GM13977 (cell line): ENCODE measurements at regions of chr1 and their contacts with region 1.

Region 1: GRCh38 chr1:160193091-160193819 is 2.9 kb downstream of the CASQ1 start:
- DNase-seq: peak; percentile 74
- CTCF ChIP-seq: peak; percentile 94

Region 2: DNA sequence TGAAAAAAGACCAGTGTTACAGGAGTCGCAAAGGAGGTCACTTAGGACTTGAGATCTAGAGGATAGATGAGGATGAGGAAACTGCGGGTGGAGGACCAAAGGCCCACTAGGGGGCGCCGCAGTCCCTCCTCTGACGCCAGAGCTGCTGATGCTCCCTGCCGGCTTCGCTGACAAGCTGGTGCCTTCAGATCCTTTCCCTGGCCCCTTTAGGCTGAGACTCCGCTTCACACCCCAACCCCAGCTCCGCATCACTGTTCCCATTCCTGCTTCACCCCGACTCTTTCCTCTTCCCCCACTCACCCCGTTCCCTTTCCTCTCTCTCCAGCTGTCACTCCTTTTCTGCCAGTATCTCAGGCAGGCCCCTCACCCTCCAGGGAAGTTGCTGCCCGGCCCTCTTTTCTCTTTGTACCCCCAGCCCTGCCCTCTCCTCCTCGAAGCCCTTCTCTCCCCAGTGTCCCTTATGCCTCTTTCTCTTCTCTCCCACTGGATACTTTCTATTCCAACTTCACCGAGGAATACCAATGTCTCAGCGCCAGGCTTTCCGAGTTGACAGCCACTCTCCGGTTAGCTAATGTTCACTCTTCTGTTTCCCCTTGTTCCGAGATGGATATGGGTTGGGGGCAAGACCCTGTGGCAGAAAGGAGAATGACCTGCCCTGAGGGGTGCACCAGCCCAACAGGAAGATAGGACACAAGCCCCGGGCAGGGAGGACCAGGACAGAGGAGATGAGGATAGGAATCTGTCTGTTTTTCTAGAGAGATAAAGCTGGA is 107.4 kb before region 1 on chr1:
- in situ Hi-C with region 1: no loop called
- DNase-seq: peak; percentile 93
- CTCF ChIP-seq: peak; percentile 84

Region 3: GRCh38 chr1:160124705-160125478 is 68.4 kb before region 1 on chr1:
- in situ Hi-C with region 1: no loop called
- DNase-seq: no peak
- CTCF ChIP-seq: no peak

Region 4: DNA sequence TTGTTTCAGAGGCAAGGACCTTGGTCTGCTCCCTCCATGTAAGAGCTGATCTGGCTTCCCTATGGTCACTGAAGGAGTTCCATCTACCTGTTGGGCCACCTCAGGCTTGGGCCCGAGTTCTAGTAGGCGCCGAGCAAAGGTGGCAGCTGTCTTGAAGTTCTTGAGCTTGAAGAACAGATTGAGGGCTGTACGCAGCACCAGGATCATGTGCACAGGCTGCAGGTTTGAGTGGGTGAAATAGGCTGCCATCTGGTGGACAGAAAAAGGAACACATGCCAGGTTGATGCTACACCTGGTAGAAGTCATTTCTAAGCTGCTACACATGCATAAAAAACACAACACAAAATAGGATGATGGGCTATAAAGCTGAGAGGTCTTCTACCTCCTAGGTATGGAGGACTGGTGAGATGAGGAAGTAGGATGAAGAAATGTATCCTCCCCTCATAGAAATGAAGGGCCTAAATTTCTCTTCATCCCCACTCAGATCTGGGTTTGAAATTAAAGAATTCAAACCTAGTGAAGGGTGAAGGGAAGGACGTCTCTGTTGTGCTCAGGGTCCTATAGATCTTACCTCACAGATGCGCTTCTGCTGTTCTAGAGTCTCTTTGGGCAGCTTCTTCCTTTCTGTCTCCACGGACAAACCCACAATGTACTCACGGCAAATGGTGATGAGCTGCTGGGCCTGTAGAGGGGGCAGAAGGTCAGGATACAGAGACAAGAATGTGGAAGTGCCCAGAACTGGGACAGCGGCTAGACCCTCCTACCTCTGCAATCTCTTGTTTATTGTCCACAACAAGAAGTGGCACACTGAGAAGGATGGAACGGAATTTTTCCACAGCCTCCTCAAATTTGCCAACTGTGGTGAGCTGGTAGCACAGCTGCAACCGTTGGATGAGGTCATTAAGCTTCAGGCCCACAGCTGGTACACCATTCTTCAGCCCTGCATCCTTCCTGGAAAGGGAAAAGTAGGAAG is 98.3 kb after region 1 on chr1:
- in situ Hi-C with region 1: loop called (anchors 10 kb)
- DNase-seq: peak; percentile 57
- CTCF ChIP-seq: peak; percentile 70

Region 5: DNA sequence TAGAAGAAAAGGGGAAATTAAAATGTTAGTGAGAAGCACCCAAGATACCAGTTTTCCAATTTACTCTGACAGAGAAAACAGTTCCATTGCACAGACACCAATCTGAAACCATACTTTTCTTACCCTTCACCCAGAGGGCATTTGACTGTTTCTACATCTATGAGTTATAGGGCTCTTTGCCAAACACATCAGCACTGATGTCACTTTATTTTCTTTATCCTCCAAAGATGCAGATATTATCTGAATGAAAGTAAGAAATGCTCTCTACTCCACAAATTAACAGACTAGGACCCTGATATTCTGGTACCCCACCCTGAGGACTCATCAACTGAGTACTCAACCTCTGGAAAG is 115.9 kb after region 1 on chr1:
- in situ Hi-C with region 1: no loop called
- DNase-seq: no peak
- CTCF ChIP-seq: no peak